ENCODE measurements at regions of chr2 and their contacts with region 1.

Region 1: DNA sequence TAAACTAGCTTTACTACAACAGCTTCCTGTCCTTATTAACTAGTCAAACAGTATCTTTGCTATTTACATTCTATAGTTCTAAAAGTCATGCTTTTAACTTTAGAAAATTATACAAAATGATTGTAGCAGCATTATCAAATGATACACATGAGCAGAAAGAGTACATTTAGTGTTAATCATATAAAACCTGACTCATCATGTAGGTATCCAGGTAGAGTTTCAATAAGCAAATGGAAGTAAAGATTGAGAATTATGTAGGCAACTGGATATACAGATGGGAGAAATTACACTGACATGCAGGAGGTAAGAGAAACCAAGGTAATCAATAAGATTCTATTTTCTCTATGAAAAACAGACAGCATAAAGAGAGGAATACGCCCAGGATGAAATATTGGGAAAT is 33.8 kb downstream of the TRIP12 start:
- DNase-seq: no peak
- CTCF ChIP-seq: no peak

Region 2: GRCh38 chr2:229653531-229653930 is 234.5 kb before region 1 on chr2:
- CTCF ChIA-PET with region 1: no interaction called
- POLR2A ChIA-PET with region 1: no interaction called
- DNase-seq: no peak
- CTCF ChIP-seq: no peak

Region 3: GRCh38 chr2:229835596-229836283 is 52.3 kb before region 1 on chr2:
- CTCF ChIA-PET with region 1: no interaction called
- POLR2A ChIA-PET with region 1: no interaction called
- DNase-seq: no peak
- CTCF ChIP-seq: no peak

Region 4: GRCh38 chr2:229901819-229902218 is 13.8 kb after region 1 on chr2:
- CTCF ChIA-PET with region 1: interaction called, 17 read pairs
- POLR2A ChIA-PET with region 1: no interaction called
- DNase-seq: no peak
- CTCF ChIP-seq: no peak